ENCODE measurements at regions of chr7 and their contacts with region 1.

Region 1: GRCh38 chr7:1225441-1226185 is 7.1 kb upstream of the UNCX start:
- DNase-seq: no peak
- H3K4me3 ChIP-seq: no peak overlapping the region
- H3K27ac ChIP-seq: no peak overlapping the region
- H3K4me1 ChIP-seq: no peaks in the 10 kb centered on the region
- H3K27me3 ChIP-seq: peaks cover 60% of the 10 kb centered on the region
- CTCF ChIP-seq: peak; percentile 37 to 60

Region 2: DNA sequence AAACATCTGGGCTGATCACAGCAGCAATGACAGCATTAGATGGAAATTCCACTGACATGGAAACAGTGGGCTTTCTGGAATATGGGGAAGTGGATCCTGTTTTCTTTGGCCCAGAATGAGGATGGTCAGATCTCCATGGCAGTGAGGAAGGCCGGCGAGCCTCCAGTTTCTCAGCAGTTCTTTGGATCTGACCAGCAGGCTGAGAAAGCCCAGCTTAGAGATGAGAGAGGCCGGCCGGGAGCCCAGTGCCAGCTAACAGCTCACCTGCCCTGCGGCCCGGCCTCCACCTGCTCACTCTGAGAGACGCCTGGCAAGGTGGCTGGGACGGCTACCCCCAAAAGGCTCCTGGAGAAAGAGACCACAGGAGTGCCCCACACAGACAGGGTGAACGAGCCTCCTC is 113.5 kb before region 1 on chr7:
- CTCF ChIA-PET with region 1: no interaction called
- dilution Hi-C with region 1: no loop called
- in situ Hi-C with region 1: no loop called
- intact Hi-C with region 1: no loop called
- DNase-seq: no peak
- H3K4me3 ChIP-seq: no peak overlapping the region
- H3K27ac ChIP-seq: no peak overlapping the region
- H3K4me1 ChIP-seq: no peaks in the 10 kb centered on the region
- H3K27me3 ChIP-seq: no peaks in the 10 kb centered on the region
- CTCF ChIP-seq: no peak

Region 3: GRCh38 chr7:1181640-1182039 is 44.0 kb before region 1 on chr7:
- CTCF ChIA-PET with region 1: no interaction called
- dilution Hi-C with region 1: loop called (anchors 5 kb)
- in situ Hi-C with region 1: no loop called
- intact Hi-C with region 1: no loop called
- DNase-seq: no peak
- H3K4me3 ChIP-seq: no peak overlapping the region
- H3K27ac ChIP-seq: no peak overlapping the region
- H3K4me1 ChIP-seq: no peaks in the 10 kb centered on the region
- H3K27me3 ChIP-seq: peaks cover 3% of the 10 kb centered on the region
- CTCF ChIP-seq: no peak

Region 4: GRCh38 chr7:1247527-1248059 is 22.0 kb after region 1 on chr7:
- CTCF ChIA-PET with region 1: interaction called, 10 read pairs
- dilution Hi-C with region 1: no loop called
- in situ Hi-C with region 1: no loop called
- intact Hi-C with region 1: no loop called
- DNase-seq: no peak
- H3K4me3 ChIP-seq: no peak overlapping the region
- H3K27ac ChIP-seq: no peak overlapping the region
- H3K4me1 ChIP-seq: no peaks in the 10 kb centered on the region
- H3K27me3 ChIP-seq: peaks cover 72% of the 10 kb centered on the region
- CTCF ChIP-seq: no peak

Region 5: DNA sequence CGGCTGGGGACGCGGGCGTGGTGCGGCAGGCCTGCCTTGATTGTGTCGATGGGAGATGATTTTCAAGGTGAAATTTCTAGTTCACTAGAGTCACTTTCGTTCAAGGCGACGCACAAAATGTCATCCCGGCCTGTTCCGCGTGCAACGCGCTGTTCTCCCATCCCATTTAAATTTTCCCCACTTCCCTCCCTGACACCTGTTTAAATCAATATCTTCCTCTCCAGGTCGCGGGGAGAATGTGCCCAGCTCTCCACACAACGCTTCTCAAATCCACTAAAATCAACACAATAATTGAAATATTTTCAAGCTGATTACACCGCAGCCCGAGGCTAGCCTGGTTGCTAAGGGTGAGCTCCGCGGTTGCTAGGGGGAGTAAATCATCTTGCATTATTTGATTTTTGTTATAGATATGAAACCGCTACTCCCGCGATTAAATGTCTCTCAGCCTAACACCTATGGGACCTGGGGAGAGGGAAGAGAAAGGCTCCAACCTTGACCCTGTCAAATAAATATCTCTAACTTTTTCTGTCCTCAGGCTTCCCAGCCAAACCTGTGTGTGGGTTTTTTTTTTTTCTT is 43.2 kb after region 1 on chr7:
- CTCF ChIA-PET with region 1: no interaction called
- dilution Hi-C with region 1: no loop called
- in situ Hi-C with region 1: no loop called
- intact Hi-C with region 1: no loop called
- DNase-seq: peak; percentile 17
- H3K4me3 ChIP-seq: no peak overlapping the region
- H3K27ac ChIP-seq: no peak overlapping the region
- H3K4me1 ChIP-seq: no peaks in the 10 kb centered on the region
- H3K27me3 ChIP-seq: peaks cover 17% of the 10 kb centered on the region
- CTCF ChIP-seq: no peak

Region 6: DNA sequence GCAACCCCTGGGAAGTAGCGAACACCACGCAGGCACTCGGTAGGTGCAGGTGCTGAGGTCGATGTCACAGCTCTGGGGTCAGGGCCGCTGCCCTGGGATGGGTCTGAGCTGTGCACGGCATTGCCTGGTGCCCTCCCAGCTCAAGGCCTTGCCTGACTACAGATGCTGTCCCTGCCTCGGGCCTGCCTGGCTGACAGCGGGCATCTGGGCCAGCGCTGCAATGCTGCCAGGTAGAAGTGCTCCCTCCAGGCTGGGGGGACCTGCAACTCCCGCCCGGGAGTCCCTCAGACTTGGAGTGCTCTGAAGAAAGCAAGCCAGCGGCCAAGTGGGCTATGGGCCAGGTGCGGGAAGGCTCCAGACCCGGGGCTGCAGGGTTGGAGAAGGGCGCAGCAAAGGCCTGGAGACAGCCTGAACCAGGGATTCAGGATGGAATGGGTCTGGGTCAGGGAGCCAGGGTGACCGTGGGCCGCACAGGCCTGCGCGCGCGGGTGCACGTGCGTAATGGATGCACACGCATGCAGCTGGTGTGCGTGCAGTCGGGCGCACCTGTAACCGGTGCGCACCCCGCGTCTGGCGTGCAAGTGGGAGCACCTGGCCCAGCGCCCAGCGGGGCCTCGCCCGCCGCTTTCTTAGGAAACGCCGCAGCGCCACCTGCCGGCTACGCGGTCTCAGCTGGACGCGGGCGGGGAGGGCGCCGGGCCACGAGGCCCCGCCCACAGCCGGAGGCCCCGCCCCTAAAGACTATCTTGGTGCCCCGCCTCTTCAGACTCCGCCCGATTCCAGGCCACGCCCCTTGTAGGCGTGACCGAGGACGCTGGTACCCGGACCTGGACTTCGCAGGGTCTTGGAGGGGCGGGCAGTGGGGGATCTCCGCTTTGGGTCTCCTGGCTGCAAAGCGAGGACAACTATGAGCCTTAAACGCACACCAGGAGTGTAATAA is 187.0 kb after region 1 on chr7:
- CTCF ChIA-PET with region 1: no interaction called
- dilution Hi-C with region 1: no loop called
- in situ Hi-C with region 1: no loop called
- intact Hi-C with region 1: loop called (anchors 1 kb)
- DNase-seq: peak; percentile 63
- H3K4me3 ChIP-seq: no peak overlapping the region
- H3K27ac ChIP-seq: no peak overlapping the region
- H3K4me1 ChIP-seq: no peaks in the 10 kb centered on the region
- H3K27me3 ChIP-seq: peaks cover 2% of the 10 kb centered on the region
- CTCF ChIP-seq: peak; percentile 47 to 75

Region 7: GRCh38 chr7:1473864-1474512 is 248.4 kb after region 1 on chr7:
- CTCF ChIA-PET with region 1: no interaction called
- dilution Hi-C with region 1: no loop called
- in situ Hi-C with region 1: no loop called
- intact Hi-C with region 1: loop called (anchors 1 kb)
- DNase-seq: peak; percentile 79
- H3K4me3 ChIP-seq: no peak overlapping the region
- H3K27ac ChIP-seq: no peak overlapping the region
- H3K4me1 ChIP-seq: peaks cover 8% of the 10 kb centered on the region
- H3K27me3 ChIP-seq: no peaks in the 10 kb centered on the region
- CTCF ChIP-seq: peak; percentile 73 to 92

Measured in mammary epithelial cell (primary cell).